ENCODE measurements at regions of chr17 and their contacts with region 1.

Region 1: DNA sequence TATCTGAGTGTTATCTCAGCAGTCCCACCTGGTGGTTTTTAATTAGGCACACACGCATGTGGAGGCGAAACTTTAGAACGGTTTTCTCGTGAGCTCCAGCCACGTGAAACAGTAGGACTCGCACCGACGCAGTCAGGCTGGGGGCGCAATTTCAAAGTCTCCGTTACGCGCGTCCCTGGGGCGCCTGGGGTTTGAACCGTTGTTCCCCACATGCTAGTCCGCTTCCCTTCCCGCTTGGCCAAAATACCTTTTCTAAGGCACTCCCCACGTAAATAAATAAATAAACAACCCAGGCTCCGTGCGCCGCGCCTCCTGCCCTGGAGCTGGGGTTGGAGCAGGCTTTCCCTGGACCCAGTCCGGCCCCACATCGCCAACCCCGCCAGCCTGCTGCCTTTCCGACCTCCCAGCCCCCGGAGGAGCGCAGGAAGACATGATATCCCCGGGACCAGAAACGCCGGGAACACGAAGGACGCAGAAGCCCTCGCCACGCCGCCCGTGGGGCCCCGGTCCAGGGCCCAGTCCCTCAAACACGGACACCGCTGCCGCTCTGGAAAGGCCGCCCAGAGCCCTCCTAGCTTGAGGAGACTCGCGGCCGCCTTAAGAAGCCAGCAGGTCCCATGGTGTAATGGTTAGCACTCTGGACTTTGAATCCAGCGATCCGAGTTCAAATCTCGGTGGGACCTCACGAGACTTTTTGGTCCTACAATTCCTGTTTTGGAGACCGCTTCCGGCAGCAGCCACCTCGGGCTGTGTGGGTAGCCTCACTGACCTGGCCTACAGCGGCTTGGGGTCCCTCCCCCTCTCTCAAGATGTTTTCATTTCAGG is 18.2 kb downstream of the GNGT2 start:
- DNase-seq: peak; percentile 81
- H3K4me3 Mint-ChIP-seq: peak overlapping the region; percentile 84
- H3K27ac Mint-ChIP-seq: peak overlapping the region; percentile 93
- H3K4me1 Mint-ChIP-seq: peaks cover 37% of the 10 kb centered on the region
- H3K27me3 Mint-ChIP-seq: no peaks in the 10 kb centered on the region

Region 2: DNA sequence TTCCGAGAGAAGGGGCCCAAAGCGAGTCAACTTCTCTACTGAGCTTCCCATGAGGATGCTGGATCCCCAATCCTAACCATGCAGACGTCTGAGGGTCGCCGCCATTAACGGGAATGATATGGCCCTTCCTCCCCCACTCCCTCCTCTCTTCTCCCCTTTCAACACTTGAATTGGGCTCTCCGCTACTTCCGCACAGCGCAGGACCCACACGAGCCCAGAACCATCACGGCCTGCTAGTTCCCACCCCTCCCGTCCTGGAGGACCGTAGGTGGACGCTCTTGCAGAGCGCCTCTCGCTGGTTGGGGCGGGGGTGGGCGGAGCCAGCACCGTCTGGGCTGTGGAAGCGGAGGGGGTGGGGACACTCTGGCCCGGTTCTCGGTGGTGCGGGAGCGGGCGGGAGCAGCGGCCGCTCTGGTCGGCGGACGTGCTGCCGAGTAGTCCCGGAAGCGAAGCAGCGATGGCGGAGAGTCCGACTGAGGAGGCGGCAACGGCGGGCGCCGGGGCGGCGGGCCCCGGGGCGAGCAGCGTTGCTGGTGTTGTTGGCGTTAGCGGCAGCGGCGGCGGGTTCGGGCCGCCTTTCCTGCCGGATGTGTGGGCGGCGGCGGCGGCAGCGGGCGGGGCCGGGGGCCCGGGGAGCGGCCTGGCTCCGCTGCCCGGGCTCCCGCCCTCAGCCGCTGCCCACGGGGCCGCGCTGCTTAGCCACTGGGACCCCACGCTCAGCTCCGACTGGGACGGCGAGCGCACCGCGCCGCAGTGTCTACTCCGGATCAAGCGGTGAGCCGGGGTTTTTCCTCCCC is 283.9 kb before region 1 on chr17 and contains the start of gene UBE2Z:
- intact Hi-C with region 1: loop called (anchors 10 kb)
- DNase-seq: peak; percentile 82
- H3K4me3 Mint-ChIP-seq: peak within 1 kb of the TSS; percentile 87
- H3K27ac Mint-ChIP-seq: peak within 1 kb of the TSS; percentile 95
- H3K4me1 Mint-ChIP-seq: peaks cover 39% of the 10 kb centered on the region
- H3K27me3 Mint-ChIP-seq: no peaks in the 10 kb centered on the region
- total RNA-seq, gene UBE2Z: 81.3 and 85.2 TPM in 2 replicates

Region 3: GRCh38 chr17:49053171-49053829 is 138.8 kb before region 1 on chr17:
- intact Hi-C with region 1: no loop called
- DNase-seq: no peak
- H3K4me3 Mint-ChIP-seq: no peak overlapping the region
- H3K27ac Mint-ChIP-seq: no peak overlapping the region
- H3K4me1 Mint-ChIP-seq: peaks cover 4% of the 10 kb centered on the region
- H3K27me3 Mint-ChIP-seq: peaks cover 14% of the 10 kb centered on the region

Region 4: DNA sequence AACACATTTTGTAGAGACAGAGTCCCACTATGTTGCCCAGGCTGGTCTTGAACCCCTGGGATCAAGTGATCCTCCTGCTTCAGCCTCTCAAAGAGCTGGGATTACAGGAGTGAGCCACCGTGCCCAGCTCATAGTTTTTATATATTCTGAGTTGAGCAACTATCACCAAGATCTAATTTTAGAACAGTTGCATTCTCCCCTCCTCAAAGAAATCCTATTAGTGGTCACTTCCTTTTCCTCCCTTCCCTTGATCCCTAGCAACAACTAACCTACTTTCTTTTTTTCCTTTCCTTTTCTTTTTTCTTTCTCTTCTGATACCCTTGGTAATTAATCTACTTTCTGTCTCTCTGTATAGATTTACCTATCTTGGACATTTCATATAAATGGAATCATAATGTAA is 121.0 kb before region 1 on chr17:
- intact Hi-C with region 1: no loop called
- DNase-seq: no peak
- H3K4me3 Mint-ChIP-seq: no peak overlapping the region
- H3K27ac Mint-ChIP-seq: no peak overlapping the region
- H3K4me1 Mint-ChIP-seq: no peaks in the 10 kb centered on the region
- H3K27me3 Mint-ChIP-seq: peaks cover 2% of the 10 kb centered on the region

Region 5: DNA sequence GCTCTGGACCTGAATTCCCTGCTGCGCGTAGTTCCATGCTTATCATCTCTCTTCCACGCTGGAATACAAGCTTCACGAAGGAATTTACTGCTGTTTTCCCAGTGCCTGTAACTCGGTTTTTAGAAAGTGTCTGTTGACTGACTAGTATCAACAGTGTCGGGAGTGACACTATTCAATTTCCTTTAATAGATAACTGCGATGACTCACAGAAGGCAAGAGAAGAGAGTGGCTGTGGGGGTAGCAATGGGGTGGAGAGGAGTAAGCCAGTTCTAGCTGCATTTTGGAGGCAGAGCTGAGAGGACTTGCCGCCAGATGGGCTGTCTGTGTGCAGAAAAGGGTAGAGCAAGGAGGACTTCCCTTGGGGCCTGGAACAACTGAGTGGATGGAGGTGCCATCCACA is 34.3 kb before region 1 on chr17:
- intact Hi-C with region 1: no loop called
- DNase-seq: no peak
- H3K4me3 Mint-ChIP-seq: no peak overlapping the region
- H3K27ac Mint-ChIP-seq: no peak overlapping the region
- H3K4me1 Mint-ChIP-seq: no peaks in the 10 kb centered on the region
- H3K27me3 Mint-ChIP-seq: peaks cover 17% of the 10 kb centered on the region

Region 6: GRCh38 chr17:49210158-49211029 is 18.3 kb after region 1 on chr17 and contains the starts of genes ABI3 and GNGT2:
- intact Hi-C with region 1: loop called (anchors 1 kb)
- DNase-seq: peak; percentile 64
- H3K4me3 Mint-ChIP-seq: peak within 1 kb of the TSS; percentile 91
- H3K27ac Mint-ChIP-seq: peak within 1 kb of the TSS; percentile 87
- H3K4me1 Mint-ChIP-seq: peaks cover 53% of the 10 kb centered on the region
- H3K27me3 Mint-ChIP-seq: no peaks in the 10 kb centered on the region
- total RNA-seq, gene ABI3: 28.5 and 30.0 TPM in 2 replicates
- total RNA-seq, gene GNGT2: 16.8 and 17.1 TPM in 2 replicates

Region 7: DNA sequence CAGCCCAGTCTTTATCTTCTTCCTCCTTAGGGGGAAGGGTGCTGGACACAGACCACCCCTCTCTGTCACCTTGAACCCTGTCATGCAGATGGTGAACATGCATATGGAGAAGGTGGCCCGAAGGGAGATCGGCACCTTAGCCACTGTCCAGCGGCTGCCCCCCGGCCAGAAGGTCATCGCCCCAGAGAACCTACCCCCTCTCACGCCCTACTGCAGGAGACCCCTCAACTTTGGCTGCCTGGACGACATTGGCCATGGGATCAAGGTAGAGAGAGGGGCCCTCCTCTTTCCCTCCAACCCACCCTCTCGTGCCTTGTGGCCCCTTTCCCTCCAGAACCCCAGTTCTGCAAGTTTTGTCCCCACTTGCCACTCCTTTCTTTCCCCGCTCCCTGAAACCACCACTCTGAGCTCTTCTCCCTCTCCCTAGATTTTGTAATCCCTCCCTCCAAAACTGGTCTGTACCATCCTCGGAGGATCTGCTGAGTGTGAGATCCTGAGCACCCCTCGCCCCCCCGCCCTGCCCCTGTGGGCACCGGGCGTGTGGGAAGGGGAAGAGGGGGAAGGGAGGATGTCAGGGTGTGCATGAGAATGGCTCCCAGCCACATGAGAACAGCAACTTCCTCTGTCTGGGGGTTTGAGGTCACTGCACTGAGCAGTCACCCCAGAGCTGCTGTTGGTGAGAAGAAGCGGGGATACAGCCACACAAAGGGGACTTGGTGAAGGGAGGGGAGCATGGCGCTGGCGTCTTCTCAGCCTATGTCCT is 25.7 kb after region 1 on chr17:
- intact Hi-C with region 1: loop called (anchors 2 kb)
- DNase-seq: peak; percentile 61
- H3K4me3 Mint-ChIP-seq: peak overlapping the region; percentile 72
- H3K27ac Mint-ChIP-seq: peak overlapping the region; percentile 92
- H3K4me1 Mint-ChIP-seq: peaks cover 54% of the 10 kb centered on the region
- H3K27me3 Mint-ChIP-seq: no peaks in the 10 kb centered on the region

Region 8: GRCh38 chr17:49343273-49343672 is 151.1 kb after region 1 on chr17:
- intact Hi-C with region 1: loop called (anchors 5 kb)
- DNase-seq: no peak
- H3K4me3 Mint-ChIP-seq: peak overlapping the region; percentile 59
- H3K27ac Mint-ChIP-seq: peak overlapping the region; percentile 74
- H3K4me1 Mint-ChIP-seq: peaks cover 43% of the 10 kb centered on the region
- H3K27me3 Mint-ChIP-seq: peaks cover 30% of the 10 kb centered on the region

Region 9: DNA sequence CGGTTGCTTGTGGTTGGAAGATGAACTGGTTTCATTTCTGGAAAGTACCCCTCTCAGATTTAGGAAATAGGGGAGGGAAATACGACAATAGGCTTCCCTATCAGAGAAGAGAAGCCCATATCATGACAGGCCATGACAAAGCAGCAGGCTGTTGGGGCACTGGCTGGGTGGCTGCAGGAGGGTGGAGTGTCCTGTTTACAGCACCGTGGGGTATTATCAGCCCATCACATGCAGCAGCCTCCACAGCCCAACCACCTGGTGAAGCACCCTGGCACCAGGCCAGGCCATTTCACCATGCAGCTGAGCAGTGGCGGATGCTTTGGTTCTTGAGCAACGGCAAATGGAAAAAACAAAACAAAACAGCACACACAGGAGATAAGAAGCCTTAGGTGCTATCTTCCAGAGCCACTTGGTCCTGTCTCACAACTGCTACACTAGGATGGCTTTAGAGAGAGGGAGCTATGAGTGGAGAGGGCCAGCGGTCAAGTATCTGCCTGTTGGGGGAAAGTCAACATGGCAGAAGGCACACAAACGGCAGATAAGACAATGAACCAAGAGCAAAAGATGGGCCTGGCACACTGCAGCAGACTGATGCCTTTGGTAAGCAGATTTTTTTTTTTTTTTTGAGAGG is 547.6 kb after region 1 on chr17:
- intact Hi-C with region 1: loop called (anchors 10 kb)
- DNase-seq: peak; percentile 89
- H3K4me3 Mint-ChIP-seq: peak overlapping the region; percentile 79
- H3K27ac Mint-ChIP-seq: peak overlapping the region; percentile 96
- H3K4me1 Mint-ChIP-seq: peaks cover 63% of the 10 kb centered on the region
- H3K27me3 Mint-ChIP-seq: no peaks in the 10 kb centered on the region

Measured in activated T-helper 2 cell treated with anti-CD3 and anti-CD28 coated beads, Interferon-gamma antibody, Interleukin-2, Interleukin-4, amounts not matched to agents 10 μg/mL and 5 μg/mL and 100 μg/mL, durations not matched to agents 14 hours and 24 hours and 36 hours (primary cell).